ENCODE measurements at regions of chr12 and their contacts with region 1.

Region 1: GRCh38 chr12:116703214-116703795 is 34.6 kb downstream of the SPRING1 start:
- DNase-seq: peak; percentile 47
- H3K4me3 Mint-ChIP-seq: no peak overlapping the region
- H3K27ac Mint-ChIP-seq: no peak overlapping the region
- H3K4me1 Mint-ChIP-seq: peaks cover 5% of the 10 kb centered on the region
- H3K27me3 Mint-ChIP-seq: peaks cover 4% of the 10 kb centered on the region

Region 2: GRCh38 chr12:116142936-116143898 is 560.1 kb before region 1 on chr12:
- intact Hi-C with region 1: loop called (anchors 10 kb)
- DNase-seq: no peak
- H3K4me3 Mint-ChIP-seq: peak overlapping the region; percentile 45
- H3K27ac Mint-ChIP-seq: peak overlapping the region; percentile 81
- H3K4me1 Mint-ChIP-seq: peaks cover 52% of the 10 kb centered on the region
- H3K27me3 Mint-ChIP-seq: no peaks in the 10 kb centered on the region

Region 3: GRCh38 chr12:116673681-116674111 is 29.6 kb before region 1 on chr12:
- intact Hi-C with region 1: no loop called
- DNase-seq: no peak
- H3K4me3 Mint-ChIP-seq: peak overlapping the region; percentile 34
- H3K27ac Mint-ChIP-seq: peak overlapping the region; percentile 55
- H3K4me1 Mint-ChIP-seq: peaks cover 49% of the 10 kb centered on the region
- H3K27me3 Mint-ChIP-seq: no peaks in the 10 kb centered on the region

Region 4: GRCh38 chr12:116882742-116883141 is 179.4 kb after region 1 on chr12:
- intact Hi-C with region 1: loop called (anchors 1 kb)
- DNase-seq: no peak
- H3K4me3 Mint-ChIP-seq: no peak overlapping the region
- H3K27ac Mint-ChIP-seq: no peak overlapping the region
- H3K4me1 Mint-ChIP-seq: peaks cover 33% of the 10 kb centered on the region
- H3K27me3 Mint-ChIP-seq: peaks cover 66% of the 10 kb centered on the region

Region 5: GRCh38 chr12:116955382-116956021 is 252.2 kb after region 1 on chr12:
- intact Hi-C with region 1: loop called (anchors 1 kb)
- DNase-seq: no peak
- H3K4me3 Mint-ChIP-seq: no peak overlapping the region
- H3K27ac Mint-ChIP-seq: no peak overlapping the region
- H3K4me1 Mint-ChIP-seq: peaks cover 32% of the 10 kb centered on the region
- H3K27me3 Mint-ChIP-seq: no peaks in the 10 kb centered on the region

Region 6: GRCh38 chr12:117011988-117012805 is 308.9 kb after region 1 on chr12:
- intact Hi-C with region 1: no loop called
- DNase-seq: no peak
- H3K4me3 Mint-ChIP-seq: no peak overlapping the region
- H3K27ac Mint-ChIP-seq: no peak overlapping the region
- H3K4me1 Mint-ChIP-seq: no peaks in the 10 kb centered on the region
- H3K27me3 Mint-ChIP-seq: peaks cover 2% of the 10 kb centered on the region

Region 7: DNA sequence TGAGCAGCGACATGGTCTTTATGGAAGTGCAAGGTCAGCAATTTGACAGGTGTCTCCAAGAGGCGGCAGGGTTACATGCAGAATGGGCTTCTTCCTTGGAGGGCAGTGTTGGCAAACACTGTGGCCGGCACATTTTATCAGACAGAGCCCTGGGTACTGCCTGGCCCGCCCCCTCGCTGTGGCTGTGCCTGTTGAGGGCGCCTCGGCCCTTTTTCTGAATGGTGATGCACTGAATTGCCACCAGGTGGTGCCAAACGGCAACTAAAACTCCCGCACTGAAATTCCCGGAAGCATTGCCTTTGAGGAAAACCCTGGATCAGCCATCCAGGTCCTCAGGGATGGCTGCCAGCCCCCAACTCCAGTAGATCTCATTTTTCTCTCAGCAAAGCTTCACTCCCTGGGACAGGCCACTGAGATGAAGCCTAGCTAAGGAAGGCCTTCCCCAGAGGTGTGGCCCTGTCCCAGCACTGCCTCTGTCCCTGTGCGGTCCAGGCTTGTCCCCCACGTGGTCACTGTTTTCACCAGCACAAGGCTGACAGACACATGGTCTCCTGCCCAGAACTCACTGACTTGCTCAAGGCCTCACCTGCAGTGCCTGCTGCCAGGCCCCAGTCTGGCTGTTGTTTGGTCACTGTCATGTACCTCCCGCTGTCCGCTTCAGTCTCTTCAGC is 322.3 kb after region 1 on chr12:
- intact Hi-C with region 1: loop called (anchors 1 kb)
- DNase-seq: peak; percentile 23
- H3K4me3 Mint-ChIP-seq: no peak overlapping the region
- H3K27ac Mint-ChIP-seq: no peak overlapping the region
- H3K4me1 Mint-ChIP-seq: peaks cover 6% of the 10 kb centered on the region
- H3K27me3 Mint-ChIP-seq: no peaks in the 10 kb centered on the region

Region 8: DNA sequence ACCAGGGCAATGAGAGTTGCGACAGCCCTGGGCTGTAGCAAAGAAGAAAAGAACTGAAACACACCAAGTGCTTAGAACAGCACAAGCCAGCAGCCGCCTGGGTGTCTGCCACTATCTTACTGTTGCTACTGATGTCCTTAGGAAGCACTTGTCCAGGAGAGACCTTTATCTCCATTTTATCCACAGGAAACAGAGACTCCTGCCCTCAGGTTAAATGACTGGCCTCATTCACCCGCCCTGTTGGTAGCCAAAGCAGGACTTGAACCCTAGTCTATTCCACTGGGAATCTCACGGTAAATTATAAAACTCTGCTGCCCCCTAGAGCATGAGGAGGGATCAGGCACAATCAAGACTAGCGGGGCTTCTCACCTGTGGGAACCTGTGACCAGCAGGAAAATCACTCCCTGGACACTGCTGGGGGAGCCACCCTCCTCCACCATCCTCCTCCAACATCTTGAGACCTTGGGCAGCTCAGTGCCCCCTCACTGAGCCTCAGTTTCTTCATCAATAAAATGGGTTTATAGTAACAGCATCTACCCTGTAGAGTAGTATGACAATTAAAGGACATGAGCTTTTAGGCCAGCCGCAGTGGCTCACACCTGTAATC is 416.4 kb after region 1 on chr12:
- intact Hi-C with region 1: loop called (anchors 1 kb)
- DNase-seq: peak; percentile 8
- H3K4me3 Mint-ChIP-seq: no peak overlapping the region
- H3K27ac Mint-ChIP-seq: no peak overlapping the region
- H3K4me1 Mint-ChIP-seq: peaks cover under 1% of the 10 kb centered on the region
- H3K27me3 Mint-ChIP-seq: peaks cover 1% of the 10 kb centered on the region

Region 9: DNA sequence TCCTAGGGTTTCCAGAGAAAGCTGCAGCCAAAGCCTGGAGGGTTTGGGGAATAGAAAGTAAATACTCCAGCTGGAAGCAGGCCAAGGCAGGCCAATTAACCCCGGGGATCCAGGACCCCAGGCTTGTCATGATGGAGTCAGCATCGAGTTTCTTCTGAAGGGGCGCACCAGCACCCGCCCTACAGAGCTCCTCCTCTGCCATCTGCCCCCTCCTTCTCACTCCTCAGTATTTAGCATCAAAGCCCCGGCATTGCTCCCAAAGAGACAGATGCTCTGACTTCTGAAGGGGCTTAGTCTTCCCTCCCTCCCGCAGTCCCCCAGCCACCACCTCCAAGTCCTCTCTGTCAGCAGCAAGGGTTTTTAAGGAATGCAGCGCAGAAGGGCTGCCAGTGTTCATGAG is 943.2 kb after region 1 on chr12:
- intact Hi-C with region 1: no loop called
- DNase-seq: no peak
- H3K4me3 Mint-ChIP-seq: no peak overlapping the region
- H3K27ac Mint-ChIP-seq: no peak overlapping the region
- H3K4me1 Mint-ChIP-seq: no peaks in the 10 kb centered on the region
- H3K27me3 Mint-ChIP-seq: no peaks in the 10 kb centered on the region